Endothelial cell of umbilical vein (primary cell): ENCODE measurements at regions of chr16 and their contacts with region 1.

Region 1: DNA sequence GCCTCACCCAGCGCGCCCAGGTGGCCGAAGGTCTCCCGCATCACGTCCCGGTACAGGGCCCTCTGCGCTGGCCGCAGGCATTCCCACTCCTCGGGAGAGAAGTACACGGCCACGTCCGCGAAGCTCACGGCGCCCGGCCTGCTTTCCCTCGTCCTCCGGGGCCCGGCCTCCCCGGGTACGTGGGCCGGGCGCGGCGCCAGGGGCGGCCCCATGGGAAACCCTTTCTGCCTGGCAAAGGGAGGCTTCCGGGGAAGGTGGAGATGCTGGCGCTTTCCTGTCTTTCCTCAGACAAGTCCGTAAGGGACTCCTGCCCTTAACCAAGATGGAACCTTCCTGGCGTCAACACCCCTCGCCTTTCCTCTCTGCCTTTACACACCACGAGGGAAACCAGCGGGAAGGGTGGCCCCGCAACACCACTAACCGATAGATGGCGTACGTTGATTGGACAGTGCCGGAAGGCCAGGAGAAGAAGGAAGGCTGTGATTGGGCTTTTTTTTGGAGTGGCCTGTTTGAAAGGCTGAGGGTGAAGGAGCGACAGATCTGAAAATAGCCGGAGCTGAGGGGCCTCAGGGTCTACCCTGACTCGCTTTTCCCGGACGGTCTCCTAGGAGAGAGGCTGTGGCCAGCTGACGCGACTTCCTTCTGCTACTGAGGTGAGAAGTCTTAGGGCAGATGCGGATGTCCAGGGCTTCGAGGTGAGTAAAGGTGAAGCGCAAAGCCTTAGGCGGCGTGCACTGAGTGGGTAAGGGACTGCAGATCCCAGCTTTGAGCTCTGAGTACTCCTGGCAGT is at the start of gene ZNF785:
- DNase-seq: peak; percentile 99
- H3K4me3 ChIP-seq: peak within 1 kb of the TSS; percentile 56 to 77 (median 72)
- H3K27ac ChIP-seq: peak within 1 kb of the TSS; percentile 49
- H3K4me1 ChIP-seq: peaks cover 7% of the 10 kb centered on the region
- H3K27me3 ChIP-seq: no peaks in the 10 kb centered on the region
- CTCF ChIP-seq: no peak
- POLR2A ChIP-seq: peak; percentile 55
- total RNA-seq, gene ZNF785: 17.6 and 21.9 TPM in 2 replicates

Region 2: DNA sequence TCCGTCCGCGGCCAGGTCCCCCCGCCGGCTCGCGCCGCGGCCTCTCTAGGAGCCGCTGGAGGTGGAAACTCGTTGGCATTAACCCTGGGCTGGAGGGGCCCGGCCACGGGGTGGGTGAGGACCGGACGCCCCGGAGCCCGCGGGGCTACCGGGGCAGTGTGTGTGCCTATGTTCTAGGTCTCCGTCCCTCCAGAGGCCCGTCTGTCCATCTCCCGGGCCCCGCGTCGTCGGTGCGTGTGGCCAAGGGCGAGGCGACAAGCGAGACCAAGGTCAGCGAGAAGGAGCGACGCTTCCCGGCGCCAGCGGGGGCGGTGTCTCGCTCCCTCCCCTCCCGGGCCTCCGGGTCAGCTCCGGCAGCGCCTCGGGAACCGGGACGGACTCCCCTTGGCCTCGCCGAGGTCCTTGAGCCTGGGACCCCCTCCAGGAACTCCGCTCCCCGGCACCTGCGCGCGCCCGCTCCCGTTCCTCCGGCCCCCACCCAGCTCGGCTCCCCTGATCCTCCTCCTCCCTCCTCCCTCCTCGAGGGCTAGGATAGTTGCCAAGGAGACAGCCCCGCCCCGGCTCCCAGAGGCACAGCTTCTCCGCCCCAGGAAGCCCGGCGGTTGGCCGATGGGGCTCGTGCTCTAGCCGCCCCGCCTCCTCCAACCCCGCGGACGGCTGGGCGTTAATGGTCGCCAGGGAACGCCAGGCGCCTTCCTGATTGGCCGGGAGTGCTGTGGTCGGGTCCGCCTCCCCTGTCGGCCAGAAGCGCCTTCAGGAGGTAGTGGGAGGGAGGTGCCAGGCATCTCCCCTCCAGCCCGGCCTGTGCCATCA is 58.6 kb before region 1 on chr16:
- CTCF ChIA-PET with region 1: no interaction called
- POLR2A ChIA-PET with region 1: no interaction called
- dilution Hi-C with region 1: no loop called
- intact Hi-C with region 1: loop called (anchors 2 kb)
- DNase-seq: peak; percentile 98
- H3K4me3 ChIP-seq: peak overlapping the region; percentile 58 to 67 (median 65)
- H3K27ac ChIP-seq: peak overlapping the region; percentile 80
- H3K4me1 ChIP-seq: peaks cover 4% of the 10 kb centered on the region
- H3K27me3 ChIP-seq: no peaks in the 10 kb centered on the region
- CTCF ChIP-seq: peak; percentile 13 to 56
- POLR2A ChIP-seq: peak; percentile 58

Region 3: DNA sequence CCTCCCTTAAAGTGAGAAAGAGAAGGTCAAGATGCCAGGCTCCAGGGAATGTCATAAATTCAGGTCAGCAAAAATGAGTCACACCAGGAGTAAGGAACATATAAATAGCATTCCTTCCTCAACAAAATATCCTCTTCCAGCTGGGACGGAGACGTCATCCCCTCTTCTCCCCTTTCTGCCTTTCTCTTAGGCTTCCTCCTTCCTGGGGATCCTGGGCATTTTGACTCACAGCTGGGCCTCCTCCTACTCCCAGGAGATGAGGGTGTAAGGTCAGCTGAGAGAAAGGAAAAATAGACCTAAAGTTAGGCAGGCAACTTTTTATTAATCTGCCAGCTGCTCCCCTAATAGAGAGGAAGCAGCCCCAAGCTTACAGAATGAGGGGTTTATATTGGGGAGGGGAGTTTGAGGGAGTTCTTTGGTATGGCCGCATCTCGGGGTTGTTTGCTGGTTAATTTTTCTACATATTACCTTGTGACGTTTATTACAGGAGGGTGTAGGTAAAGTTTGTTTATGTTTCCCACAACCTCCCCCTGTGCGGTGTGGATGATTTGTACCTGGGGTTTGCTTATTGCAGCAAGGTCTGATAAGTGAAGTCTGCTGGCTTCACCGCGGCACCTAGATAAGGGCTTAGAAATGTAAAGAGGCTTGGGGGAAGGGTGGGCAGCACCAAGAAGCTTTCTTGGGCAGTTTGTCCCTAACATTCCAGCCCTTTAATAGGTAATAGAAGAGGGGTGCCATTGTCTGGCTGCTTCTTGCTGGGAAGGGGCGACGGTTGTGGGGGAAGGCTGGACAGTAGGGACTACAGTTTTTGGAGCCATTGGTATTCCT is 43.9 kb before region 1 on chr16:
- CTCF ChIA-PET with region 1: no interaction called
- POLR2A ChIA-PET with region 1: no interaction called
- dilution Hi-C with region 1: no loop called
- intact Hi-C with region 1: no loop called
- DNase-seq: peak; percentile 59
- H3K4me3 ChIP-seq: no peak overlapping the region
- H3K27ac ChIP-seq: peak overlapping the region; percentile 29
- H3K4me1 ChIP-seq: peaks cover 12% of the 10 kb centered on the region
- H3K27me3 ChIP-seq: no peaks in the 10 kb centered on the region
- CTCF ChIP-seq: no peak
- POLR2A ChIP-seq: no peak

Region 4: DNA sequence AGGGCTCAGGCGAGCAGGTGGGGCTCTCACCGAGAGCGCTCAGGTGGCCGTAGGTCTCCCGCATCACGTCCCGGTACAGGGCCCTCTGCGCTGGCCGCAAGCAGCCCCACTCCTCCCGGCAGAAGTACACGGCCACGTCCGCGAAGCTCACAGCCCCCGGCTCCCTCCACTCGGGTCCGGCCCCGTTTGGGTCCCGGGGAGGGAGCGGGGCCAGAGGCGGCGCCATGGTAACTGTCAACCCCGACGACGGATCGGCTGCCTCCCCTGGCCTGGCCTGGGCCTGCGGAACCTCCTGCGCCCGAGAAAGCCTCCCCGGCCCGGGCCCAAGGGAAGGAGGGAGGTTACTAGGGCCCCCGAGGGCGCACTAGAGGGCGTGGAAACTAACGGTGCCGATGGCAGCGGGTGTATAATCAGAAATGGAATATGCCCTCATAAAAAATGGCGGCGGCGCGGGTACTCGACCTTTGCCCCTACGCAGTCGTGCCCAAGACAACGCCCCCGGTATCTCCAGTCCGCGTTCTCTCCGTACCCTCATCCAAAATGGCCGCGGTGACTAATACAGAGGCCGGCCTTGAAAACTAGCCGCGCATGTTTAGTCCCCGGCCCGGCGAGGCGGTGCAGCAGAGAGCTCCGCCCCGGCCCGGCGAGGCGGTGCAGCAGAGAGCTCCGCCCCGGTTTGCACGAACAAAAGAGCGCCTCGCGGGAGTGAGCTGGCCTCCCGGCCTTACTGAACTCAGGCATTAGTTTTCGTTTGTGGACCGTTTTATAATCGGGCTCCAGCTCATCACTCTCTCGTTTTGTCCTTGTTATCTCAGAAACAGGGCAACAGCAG is 27.4 kb before region 1 on chr16 and contains the start of gene ZNF764:
- CTCF ChIA-PET with region 1: no interaction called
- POLR2A ChIA-PET with region 1: no interaction called
- dilution Hi-C with region 1: no loop called
- intact Hi-C with region 1: loop called (anchors 1 kb)
- DNase-seq: peak; percentile 98
- H3K4me3 ChIP-seq: peak within 1 kb of the TSS; percentile 67 to 89 (median 75)
- H3K27ac ChIP-seq: peak within 1 kb of the TSS; percentile 83
- H3K4me1 ChIP-seq: peaks cover 12% of the 10 kb centered on the region
- H3K27me3 ChIP-seq: no peaks in the 10 kb centered on the region
- CTCF ChIP-seq: no peak
- POLR2A ChIP-seq: peak; percentile 93
- total RNA-seq, gene ZNF764: 10.7 and 12.1 TPM in 2 replicates

Region 5: GRCh38 chr16:30571695-30572600 is 13.6 kb before region 1 on chr16 and contains the start of gene ZNF688:
- CTCF ChIA-PET with region 1: no interaction called
- POLR2A ChIA-PET with region 1: no interaction called
- dilution Hi-C with region 1: no loop called
- intact Hi-C with region 1: loop called (anchors 1 kb)
- DNase-seq: peak; percentile 97
- H3K4me3 ChIP-seq: peak within 1 kb of the TSS; percentile 31 to 77 (median 76)
- H3K27ac ChIP-seq: peak within 1 kb of the TSS; percentile 78
- H3K4me1 ChIP-seq: peaks cover 16% of the 10 kb centered on the region
- H3K27me3 ChIP-seq: no peaks in the 10 kb centered on the region
- CTCF ChIP-seq: no peak
- POLR2A ChIP-seq: peak; percentile 86
- total RNA-seq, gene ZNF688: 10.5 and 10.9 TPM in 2 replicates

Region 6: DNA sequence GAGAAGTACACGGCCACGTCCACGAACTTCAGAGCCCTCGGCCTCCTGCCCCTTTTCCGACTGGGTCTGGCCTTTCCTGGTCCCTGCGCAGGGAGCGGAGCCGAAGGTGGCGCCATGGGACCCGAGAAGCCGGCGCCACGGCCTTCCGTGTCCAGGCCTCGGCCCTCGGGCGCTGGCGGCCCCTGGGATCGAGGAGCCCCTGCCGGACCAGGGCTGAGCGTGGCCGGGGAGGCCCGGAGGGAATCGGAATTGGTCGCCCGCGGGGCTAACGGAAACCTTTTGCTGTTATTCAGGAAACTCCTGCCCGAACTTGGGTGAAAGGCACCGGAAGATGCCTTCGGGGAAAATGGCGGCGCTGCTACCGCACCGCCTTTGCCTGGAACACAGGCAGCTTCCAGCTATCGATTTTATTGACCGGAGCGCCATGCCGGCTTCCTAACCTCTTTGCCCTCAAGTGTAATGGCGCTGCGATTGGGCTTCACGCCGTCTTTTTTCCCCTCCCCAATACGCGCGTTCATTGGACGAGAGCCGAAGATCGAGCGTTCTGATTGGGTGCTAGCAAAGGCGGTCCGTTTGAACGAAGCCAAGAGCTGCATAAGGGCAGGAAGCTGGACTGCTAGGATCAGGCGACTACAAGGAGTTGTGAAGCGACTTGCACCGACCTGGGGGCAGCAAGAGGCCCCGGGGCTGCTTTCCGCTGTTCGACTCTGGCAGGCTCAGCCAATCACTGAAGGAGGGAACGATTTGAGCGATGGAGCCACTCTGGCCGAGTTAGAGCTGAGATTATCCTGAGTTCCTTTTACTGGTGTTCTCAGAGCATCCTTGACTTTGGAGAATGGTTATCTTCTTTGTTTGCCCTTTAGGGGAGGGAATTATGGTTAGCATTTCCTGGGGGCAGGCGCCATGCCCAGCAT is 24.6 kb after region 1 on chr16 and contains the start of gene ZNF689:
- CTCF ChIA-PET with region 1: no interaction called
- POLR2A ChIA-PET with region 1: no interaction called
- dilution Hi-C with region 1: no loop called
- intact Hi-C with region 1: loop called (anchors 1 kb)
- DNase-seq: peak; percentile 98
- H3K4me3 ChIP-seq: peak within 1 kb of the TSS; percentile 29 to 77 (median 70)
- H3K27ac ChIP-seq: peak within 1 kb of the TSS; percentile 79
- H3K4me1 ChIP-seq: peaks cover 4% of the 10 kb centered on the region
- H3K27me3 ChIP-seq: no peaks in the 10 kb centered on the region
- CTCF ChIP-seq: no peak
- POLR2A ChIP-seq: peak; percentile 74
- total RNA-seq, gene ZNF689: 6.8 and 8.4 TPM in 2 replicates

Region 7: DNA sequence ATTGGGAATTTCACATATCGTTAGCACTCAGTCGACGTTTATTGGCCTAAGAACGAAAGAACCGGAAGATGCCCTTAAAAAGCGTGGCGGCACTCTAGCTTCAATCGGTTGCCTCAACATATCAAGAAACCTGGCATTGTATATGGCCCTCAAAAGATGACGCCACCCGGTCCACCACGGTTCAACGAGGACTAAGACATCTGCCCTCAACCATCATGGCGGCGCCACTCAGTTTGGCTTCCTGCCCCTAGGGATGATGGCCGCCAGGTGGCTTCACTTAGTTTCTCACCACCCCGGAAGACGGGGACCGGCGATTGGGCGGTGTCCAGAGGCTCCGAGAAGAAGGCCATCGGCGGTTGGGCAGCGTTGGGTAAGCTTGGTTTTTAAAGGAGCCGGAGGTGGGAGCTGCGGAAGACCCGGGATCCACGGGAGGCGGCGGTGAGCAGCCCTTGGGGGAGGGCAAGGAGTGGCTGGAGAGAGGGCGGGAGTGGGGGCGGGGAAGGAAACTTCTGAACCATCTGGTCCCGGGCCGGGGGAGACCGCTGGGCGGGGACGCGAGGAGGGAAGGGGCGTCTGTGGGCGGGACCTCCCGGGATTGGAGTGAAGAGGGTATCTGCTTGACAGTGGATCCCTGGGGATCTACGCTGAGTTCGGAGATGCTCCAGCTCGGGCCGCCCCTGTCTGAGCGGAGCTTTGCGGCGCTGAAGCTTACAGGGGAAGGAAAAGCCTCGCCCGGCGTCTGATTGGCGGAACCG is 65.0 kb after region 1 on chr16 and contains the start of gene PRR14:
- CTCF ChIA-PET with region 1: no interaction called
- POLR2A ChIA-PET with region 1: no interaction called
- dilution Hi-C with region 1: no loop called
- intact Hi-C with region 1: loop called (anchors 2 kb)
- DNase-seq: peak; percentile 100
- H3K4me3 ChIP-seq: peak within 1 kb of the TSS; percentile 36 to 95 (median 66)
- H3K27ac ChIP-seq: peak within 1 kb of the TSS; percentile 52
- H3K4me1 ChIP-seq: peaks cover 11% of the 10 kb centered on the region
- H3K27me3 ChIP-seq: no peaks in the 10 kb centered on the region
- CTCF ChIP-seq: no peak
- POLR2A ChIP-seq: peak; percentile 25
- total RNA-seq, gene PRR14: 57.0 and 70.0 TPM in 2 replicates

Region 8: DNA sequence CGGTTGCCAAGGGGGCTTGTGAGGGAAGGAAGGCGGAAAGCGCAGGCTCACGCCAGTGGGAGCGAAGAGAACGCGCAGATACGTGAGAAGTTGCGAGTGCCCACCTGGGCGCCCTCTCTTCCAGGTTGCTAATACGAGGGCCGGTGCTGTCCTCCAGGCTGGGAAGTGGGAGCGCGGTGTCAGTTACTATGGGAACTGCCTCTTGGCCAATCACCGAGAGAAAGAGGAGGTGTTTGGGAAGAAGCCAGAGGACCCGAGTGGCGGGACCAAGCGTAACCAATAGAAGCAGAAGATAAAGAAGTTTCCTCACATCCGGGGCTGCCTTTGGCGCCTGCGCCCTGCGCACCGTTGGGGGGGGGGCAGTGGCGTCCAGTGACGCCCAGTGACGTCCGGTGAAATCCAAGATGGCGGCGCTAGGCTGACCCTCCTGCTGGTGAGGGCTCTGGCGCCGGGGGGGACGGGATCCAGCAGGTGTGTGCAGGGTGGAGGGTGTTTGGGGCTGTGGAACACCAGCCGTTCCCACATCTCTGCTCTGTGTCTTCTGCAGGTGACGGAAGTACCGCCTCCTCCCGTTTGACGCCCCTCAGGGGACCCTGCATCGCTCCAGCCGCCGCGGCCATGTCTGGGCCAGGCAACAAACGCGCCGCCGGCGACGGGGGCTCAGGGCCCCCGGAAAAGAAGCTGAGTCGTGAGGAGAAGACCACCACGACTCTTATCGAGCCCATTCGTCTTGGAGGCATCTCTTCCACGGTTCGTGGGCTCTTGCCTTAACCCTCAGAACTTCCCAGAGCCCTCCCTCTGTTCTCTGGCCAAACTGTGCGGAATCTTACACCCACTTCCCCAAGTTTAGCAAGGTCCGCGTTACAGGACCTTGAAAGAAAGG is 176.6 kb after region 1 on chr16 and contains the starts of genes CFAP119 and RNF40:
- CTCF ChIA-PET with region 1: no interaction called
- POLR2A ChIA-PET with region 1: no interaction called
- dilution Hi-C with region 1: no loop called
- intact Hi-C with region 1: no loop called
- DNase-seq: peak; percentile 99
- H3K4me3 ChIP-seq: peak within 1 kb of the TSS; percentile 19 to 87 (median 75)
- H3K27ac ChIP-seq: peak within 1 kb of the TSS; percentile 47
- H3K4me1 ChIP-seq: peaks cover 15% of the 10 kb centered on the region
- H3K27me3 ChIP-seq: no peaks in the 10 kb centered on the region
- CTCF ChIP-seq: no peak
- POLR2A ChIP-seq: peak; percentile 89
- total RNA-seq, gene CFAP119: 6.5 and 7.2 TPM in 2 replicates
- total RNA-seq, gene RNF40: 97.0 and 102 TPM in 2 replicates

Region 9: DNA sequence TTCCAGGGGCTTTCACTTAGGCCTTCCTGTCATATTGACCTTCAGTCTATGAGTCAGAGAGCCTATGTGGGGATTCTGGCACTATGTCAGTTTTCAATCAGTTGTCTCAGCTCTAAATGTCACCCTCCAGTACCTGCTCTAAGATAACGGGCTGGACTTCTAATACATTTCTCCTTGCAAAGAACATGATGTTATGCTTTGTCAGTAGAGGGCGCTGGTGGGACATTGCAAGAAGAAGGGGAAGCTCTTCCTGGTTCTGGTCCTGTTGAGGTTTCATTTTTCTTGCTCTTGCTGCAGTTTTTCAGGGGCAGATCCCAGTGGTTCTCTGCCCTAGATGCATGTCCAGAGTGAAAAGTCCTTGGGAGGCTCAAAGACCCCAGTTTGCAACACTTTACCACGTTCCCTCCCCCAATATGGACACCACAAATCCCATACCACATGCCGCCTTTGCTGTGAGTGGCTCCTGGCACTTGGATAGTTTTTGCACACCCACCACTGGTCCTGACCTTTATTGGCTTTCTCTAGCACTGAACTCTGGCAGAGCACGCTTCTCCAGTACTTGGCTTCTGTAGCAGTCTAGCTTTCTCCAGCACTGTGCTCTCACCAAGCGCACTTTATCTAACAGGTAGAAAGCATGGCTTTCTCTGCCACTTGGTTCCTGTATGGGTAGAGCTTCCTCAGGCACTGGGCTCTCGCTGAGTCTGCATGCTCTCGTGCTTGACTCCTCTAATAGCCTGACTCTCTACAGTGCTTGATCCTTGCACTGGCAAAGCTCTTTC is 259.3 kb after region 1 on chr16:
- CTCF ChIA-PET with region 1: no interaction called
- POLR2A ChIA-PET with region 1: no interaction called
- dilution Hi-C with region 1: no loop called
- intact Hi-C with region 1: no loop called
- DNase-seq: peak; percentile 81
- H3K4me3 ChIP-seq: no peak overlapping the region
- H3K27ac ChIP-seq: no peak overlapping the region
- H3K4me1 ChIP-seq: no peaks in the 10 kb centered on the region
- H3K27me3 ChIP-seq: no peaks in the 10 kb centered on the region
- CTCF ChIP-seq: peak; percentile 80 to 82
- POLR2A ChIP-seq: no peak